HEK293 (cell line): ENCODE measurements at regions of chr6 and their contacts with region 1.

Region 1: DNA sequence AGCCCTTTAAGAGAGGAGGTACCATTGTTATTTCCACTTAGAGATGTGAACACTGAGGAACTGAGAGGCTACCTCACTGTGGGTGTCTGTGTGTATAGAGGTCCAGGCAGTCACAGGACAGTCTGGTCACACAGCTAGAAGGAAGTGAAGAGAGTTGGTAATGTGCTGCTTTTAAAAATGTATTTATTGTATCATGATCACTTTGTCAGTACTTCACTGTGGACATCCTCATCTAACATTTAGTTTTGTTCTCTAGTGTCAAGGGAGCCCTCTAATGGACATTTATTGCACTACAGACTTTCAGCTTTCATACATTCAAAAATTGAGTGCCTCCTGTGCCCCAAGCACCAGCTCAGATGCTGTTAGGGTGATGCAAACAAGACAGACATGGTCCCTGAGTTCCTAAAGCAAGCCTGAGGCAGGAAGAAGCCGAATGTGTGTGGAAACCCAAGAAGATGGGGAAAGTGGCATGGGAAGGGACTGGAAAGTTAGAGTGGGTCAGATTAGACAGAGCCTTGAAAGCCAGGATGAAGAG is 123.0 kb downstream of the SLC16A10 start:
- H3K4me3 ChIP-seq: no peak overlapping the region
- H3K27ac ChIP-seq: no peak overlapping the region
- H3K4me1 ChIP-seq: no peaks in the 10 kb centered on the region
- CTCF ChIP-seq: no peak

Region 2: DNA sequence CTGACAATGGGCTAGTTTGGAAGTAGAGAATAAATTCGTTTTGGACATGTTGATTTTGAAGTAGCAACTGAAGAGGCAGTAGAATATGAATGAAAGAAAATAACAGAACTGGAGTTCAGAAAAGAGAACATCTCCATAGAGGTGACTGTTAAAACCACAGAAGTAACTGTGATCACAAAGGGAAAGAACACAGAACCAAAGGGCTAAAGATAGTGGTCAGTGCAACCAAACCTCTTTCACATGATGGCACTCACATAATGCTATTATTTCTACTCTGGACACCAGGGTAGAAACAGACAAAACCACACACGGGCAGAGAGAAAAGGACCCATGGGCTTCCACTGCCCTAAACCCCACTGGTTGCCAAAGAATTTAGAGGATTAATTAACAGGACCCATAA is 453.4 kb before region 1 on chr6:
- CTCF ChIA-PET with region 1: interaction called, 12 read pairs
- POLR2A ChIA-PET with region 1: no interaction called
- H3K4me3 ChIP-seq: no peak overlapping the region
- H3K27ac ChIP-seq: no peak overlapping the region
- H3K4me1 ChIP-seq: no peaks in the 10 kb centered on the region
- CTCF ChIP-seq: no peak

Region 3: GRCh38 chr6:111030008-111031007 is 180.0 kb before region 1 on chr6:
- CTCF ChIA-PET with region 1: interaction called, 14 read pairs
- POLR2A ChIA-PET with region 1: no interaction called
- H3K4me3 ChIP-seq: no peak overlapping the region
- H3K27ac ChIP-seq: no peak overlapping the region
- H3K4me1 ChIP-seq: peaks cover 5% of the 10 kb centered on the region
- CTCF ChIP-seq: no peak

Region 4: GRCh38 chr6:111052036-111052570 is 158.2 kb before region 1 on chr6:
- CTCF ChIA-PET with region 1: interaction called, 30 read pairs
- POLR2A ChIA-PET with region 1: no interaction called
- H3K4me3 ChIP-seq: no peak overlapping the region
- H3K27ac ChIP-seq: no peak overlapping the region
- H3K4me1 ChIP-seq: no peaks in the 10 kb centered on the region
- CTCF ChIP-seq: no peak

Region 5: DNA sequence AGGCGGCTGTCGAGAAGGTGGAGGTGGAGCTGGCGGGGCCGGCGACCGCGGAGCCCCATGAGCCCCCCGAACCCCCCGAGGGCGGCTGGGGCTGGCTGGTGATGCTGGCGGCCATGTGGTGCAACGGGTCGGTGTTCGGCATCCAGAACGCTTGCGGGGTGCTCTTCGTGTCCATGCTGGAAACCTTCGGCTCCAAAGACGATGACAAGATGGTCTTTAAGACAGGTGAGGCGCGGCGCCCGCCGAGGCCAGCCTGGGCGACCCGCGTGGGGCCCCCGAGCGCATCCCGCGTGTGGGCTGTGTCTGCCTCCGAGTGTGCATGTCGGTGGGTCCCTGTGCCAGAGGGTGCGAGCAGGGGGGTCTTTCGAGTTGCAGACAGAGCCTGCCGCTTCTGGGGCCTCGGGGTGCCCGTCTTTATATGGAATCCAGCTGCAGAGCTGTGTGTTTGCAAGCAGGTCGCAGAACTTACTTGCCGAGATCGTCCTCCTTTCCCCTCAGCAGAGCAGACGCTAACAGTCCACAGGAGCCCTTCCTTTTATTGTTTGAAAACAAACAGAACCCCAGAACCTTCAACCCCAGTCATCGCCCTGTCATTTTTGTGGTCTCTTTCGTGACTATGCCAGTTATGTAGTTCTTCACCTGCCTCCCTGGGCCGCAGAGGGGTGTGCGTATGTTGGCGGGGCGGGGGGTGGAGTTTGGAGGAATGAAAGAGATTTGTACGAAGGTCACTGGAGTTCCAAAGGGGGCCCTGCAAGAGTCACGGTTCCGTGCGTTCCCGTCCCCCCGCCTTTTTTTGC is 122.2 kb before region 1 on chr6:
- CTCF ChIA-PET with region 1: interaction called, 10 read pairs
- POLR2A ChIA-PET with region 1: interaction called, 7 read pairs
- H3K4me3 ChIP-seq: peak overlapping the region; percentile 57
- H3K27ac ChIP-seq: peak overlapping the region; percentile 78; the same call in 1 of the 2 replicates
- H3K4me1 ChIP-seq: peaks cover 7% of the 10 kb centered on the region
- CTCF ChIP-seq: no peak

Region 6: DNA sequence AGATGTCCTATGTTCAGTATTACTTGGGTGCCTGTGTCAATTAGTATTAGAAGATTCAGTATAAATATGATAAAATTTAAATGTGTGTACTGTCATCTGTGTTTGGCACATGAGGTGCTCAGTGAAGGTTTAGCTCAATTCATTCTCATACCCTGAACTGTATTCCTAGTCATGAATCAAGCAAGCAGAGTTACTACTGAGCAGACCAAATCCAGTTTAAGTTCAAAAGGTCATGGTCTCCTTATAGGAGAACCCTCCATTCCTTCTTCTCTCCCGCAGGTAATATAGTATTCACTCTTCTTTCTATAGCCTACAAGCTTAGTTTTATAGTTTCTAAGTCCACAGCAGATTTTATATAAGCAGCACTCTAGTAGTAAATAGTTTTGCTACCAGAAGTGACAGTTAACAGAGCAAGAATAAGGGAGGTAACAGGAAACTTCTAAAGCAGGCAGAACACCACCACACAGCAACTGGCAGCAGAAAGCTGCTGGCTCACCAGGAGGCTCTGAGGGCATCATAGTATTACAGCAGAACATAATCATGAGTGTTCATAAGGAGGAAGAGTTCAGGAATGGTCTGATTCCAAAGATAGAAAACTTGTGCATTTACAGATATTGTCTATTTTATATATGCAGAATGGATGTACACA is 10.2 kb after region 1 on chr6:
- CTCF ChIA-PET with region 1: interaction called, 28 read pairs
- POLR2A ChIA-PET with region 1: no interaction called
- H3K4me3 ChIP-seq: no peak overlapping the region
- H3K27ac ChIP-seq: no peak overlapping the region
- H3K4me1 ChIP-seq: no peaks in the 10 kb centered on the region
- CTCF ChIP-seq: no peak